ENCODE measurements at regions of chr3 and their contacts with region 1.

Region 1: DNA sequence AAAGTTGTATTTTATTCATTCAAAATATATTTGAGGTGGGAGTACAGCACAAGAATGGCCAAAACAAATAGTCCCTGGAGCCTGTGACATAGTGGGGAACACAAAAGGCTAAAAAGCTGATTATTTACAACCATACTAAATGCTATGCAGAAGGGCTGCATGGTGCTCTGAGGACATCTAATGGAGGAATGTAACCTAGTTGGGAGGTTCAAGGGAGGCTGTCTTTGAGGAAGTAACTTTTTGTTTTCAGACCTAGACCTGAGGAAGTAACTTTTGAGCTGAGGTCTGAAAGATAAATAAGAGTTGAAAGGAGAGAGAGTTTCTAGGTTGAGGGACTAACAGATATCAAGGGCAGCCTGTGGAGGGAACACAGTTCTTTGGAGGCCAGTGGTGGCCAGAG is 34.8 kb upstream of the RASA2 start:
- ATAC-seq: peak; percentile 12 to 85 (median 57)
- H3K4me3 ChIP-seq: no peak overlapping the region
- H3K27ac ChIP-seq: no peak overlapping the region
- H3K4me1 ChIP-seq: peaks cover 6 to 17% of the 10 kb centered on the region in 2 donors

Region 2: DNA sequence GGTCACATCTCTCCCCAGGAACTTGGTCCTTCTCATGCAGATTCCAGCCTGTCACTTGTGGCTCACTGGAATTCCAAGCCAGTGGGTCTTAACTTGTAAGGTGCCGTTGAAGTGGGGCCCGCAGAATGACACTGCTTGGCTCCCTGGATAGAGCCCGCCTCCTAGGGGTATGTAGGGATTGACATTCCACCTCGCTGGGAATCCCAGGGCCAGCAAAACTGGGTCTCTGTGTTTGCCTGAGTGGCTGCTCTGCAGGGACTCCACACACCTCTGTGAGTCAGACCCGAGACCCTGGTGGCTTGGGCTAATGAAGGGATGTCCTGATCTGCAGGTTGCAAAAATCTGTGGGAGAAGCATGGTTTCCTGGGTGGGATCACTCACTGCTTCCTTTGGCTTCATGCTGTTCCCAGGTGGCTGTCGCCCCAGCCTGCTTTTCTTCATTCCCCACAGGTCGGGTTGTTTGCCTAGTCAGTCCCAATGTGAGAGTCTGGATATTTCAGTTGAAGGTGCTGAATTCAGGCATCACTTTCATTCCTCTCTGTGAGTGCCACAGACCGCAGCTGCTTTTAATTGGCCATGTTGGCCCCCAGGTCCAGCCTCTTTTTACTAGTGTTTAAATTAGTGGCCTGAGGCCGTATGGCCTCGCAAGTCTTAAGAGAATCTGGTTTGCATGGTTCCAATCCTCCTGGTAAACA is 930.1 kb before region 1 on chr3:
- in situ Hi-C with region 1: no loop called
- ATAC-seq: no peak
- H3K4me3 ChIP-seq: no peak overlapping the region
- H3K27ac ChIP-seq: no peak overlapping the region
- H3K4me1 ChIP-seq: no peaks in the 10 kb centered on the region

Region 3: GRCh38 chr3:141020143-141020830 is 431.7 kb before region 1 on chr3:
- in situ Hi-C with region 1: no loop called
- ATAC-seq: no peak
- H3K4me3 ChIP-seq: no peak overlapping the region
- H3K27ac ChIP-seq: no peak overlapping the region
- H3K4me1 ChIP-seq: no peaks in the 10 kb centered on the region

Region 4: DNA sequence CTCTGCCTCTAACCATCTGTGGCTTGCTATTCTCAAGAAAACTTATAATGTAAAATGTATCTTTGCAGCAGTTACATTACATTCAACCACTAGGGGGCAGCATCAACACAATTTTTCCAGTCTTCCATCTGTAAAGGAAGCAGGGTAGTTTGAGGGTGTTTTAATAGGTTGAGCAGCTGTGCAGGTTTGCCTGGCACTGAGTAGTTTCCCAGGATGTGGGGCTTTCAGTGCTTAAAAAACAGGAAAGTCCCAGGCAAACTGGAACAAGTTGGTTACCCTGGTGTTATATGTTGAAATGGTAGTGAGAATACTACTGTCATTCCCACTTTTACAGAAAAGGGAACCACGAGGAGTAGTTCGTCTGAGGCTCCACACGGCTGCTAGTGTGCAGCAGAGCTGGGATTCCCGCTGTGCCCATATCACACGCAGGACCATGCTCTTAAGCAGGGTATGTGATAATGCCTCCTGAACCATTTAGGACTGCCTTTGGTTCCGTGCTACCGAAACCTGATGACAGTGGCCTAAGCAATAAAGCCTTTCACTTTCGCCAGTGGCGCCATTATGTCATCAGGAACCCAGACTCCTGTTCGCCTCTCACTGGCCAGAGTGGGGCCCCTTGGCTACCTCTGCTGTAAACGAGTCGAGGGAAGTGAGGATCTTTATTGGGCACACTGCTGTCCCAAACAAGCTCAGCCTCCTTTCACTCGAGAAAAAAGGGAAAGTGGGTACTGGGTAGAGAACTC is 148.4 kb before region 1 on chr3:
- in situ Hi-C with region 1: loop called in 4 of 9 experiments (anchors 10 to 25 kb)
- ATAC-seq: peak; percentile 16 to 82 (median 63)
- H3K4me3 ChIP-seq: no peak overlapping the region
- H3K27ac ChIP-seq: no peak overlapping the region
- H3K4me1 ChIP-seq: peaks cover 0 to 11% of the 10 kb centered on the region in 2 donors

Measured in motor neuron (in vitro differentiated cells).